ENCODE measurements at regions of chr6 and their contacts with region 1.

Region 1: DNA sequence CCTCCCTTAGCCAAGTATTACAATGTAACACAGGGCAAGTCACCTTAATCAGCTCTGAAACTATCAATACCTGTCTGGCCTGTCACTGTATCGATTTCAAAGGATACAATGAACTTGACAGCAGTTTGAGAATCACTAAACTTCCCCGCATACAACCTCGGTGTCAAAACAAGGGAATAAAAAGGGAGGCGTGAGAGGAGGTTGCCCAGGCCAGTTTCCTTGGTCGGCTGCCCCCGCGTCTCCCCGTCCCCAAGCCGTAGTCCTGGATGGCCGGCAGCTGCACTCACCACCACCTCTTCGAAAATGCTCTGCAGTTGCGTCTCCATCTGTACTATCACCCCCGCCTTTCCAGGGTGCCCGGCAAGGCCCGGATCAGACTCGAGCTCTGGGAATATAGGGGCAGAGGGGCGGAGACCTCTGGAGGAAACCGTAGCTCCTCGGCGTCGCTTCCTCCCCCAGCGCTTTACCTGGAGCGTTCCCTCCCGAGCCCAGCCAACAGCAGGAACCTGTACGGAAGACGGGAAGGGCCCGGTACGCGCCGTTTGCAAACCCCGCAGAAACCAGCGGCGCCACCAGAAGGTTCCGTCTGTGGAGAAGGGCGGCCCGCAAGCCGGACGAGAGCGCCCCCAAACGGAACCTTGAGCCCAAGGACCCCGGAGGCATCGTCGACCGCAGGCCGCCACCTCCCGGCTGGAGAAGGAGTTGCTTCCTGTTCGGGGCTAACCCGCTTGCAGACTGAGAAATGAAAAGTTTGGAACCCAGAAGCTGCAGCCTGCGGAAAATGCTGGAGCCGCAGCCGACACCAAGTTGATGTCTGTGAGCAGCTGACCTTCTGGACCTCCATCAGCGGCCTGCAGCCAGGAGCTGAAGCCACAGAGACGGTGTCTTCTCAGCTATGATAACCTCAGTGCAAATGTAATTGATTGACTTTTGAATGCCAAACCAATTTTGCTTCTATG is at the start of gene MED23:
- DNase-seq: peak; percentile 95
- ATAC-seq: peak; percentile 93
- H3K4me3 Mint-ChIP-seq: peak within 1 kb of the TSS; percentile 98
- H3K27ac Mint-ChIP-seq: peak within 1 kb of the TSS; percentile 94
- H3K4me1 Mint-ChIP-seq: peaks cover 27% of the 10 kb centered on the region
- H3K27me3 Mint-ChIP-seq: no peaks in the 10 kb centered on the region
- total RNA-seq, gene MED23: 26.1 to 27.8 TPM

Region 2: DNA sequence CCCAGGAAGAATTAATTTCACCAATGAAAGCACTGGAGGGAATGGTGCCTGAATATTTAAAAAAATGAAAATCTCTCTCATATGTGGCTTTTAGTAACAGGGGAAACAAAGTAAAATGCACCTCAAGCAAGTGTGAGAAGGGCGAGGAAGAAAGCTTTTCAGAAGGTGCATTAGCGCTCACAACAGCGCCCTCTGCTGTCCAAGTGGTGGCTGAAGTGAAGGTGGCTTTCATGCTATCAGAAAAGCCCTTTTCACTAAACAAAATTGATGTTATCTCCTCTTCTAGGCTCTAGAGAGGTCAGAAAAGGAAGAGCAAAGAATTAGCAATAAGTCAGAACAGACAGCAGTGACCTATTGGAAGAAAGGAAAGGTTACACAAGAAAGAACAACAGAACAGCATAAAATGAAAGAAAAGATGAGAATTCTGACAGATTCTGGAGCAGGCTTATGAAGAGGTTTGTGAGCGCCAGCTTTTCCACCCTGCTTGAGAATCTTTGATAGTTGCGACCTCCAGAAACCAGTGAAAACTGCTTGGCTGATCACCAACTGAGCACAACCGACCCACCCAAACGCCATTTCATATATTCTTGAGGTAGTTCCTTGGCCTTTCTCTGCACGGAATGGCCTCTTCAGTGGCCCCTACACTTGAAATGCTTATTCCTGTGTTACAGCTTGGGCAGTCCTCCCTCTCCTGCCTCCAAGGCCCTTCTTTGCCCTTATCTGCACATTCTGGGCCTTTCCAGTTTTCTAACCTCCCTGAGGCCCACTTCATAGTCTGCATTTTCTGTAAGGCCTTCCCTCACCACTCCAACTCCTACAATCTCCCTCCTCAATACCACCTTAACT is 755.5 kb before region 1 on chr6:
- CTCF ChIA-PET with region 1: interaction called, 11 read pairs
- POLR2A ChIA-PET with region 1: no interaction called
- DNase-seq: peak; percentile 83
- ATAC-seq: no peak
- H3K4me3 Mint-ChIP-seq: no peak overlapping the region
- H3K27ac Mint-ChIP-seq: no peak overlapping the region
- H3K4me1 Mint-ChIP-seq: peaks cover 4% of the 10 kb centered on the region
- H3K27me3 Mint-ChIP-seq: no peaks in the 10 kb centered on the region

Region 3: DNA sequence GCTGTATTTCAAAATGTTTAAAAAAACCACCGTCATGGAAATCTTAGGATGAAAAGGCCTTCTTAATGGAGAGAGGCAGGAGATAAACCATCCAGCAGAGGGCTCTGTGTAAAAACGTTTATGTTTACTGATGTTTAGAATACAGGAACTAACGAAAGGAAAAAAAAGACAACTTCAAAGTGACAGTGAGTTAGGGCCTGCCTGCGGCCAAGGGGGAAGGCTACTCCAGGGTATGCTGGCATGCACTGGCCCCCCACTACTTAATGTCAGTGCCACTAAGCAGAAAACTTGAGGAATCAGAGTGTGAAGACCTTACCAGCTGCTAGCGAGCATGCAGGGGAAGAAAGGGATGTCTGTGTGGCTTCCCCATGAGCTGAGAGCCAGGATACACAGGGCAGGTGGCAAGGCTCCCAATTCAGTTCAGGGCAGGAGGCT is 445.0 kb before region 1 on chr6:
- CTCF ChIA-PET with region 1: interaction called, 21 read pairs
- POLR2A ChIA-PET with region 1: no interaction called
- DNase-seq: peak; percentile 55
- ATAC-seq: peak; percentile 88
- H3K4me3 Mint-ChIP-seq: no peak overlapping the region
- H3K27ac Mint-ChIP-seq: peak overlapping the region; percentile 96
- H3K4me1 Mint-ChIP-seq: peaks cover 11% of the 10 kb centered on the region
- H3K27me3 Mint-ChIP-seq: no peaks in the 10 kb centered on the region

Region 4: GRCh38 chr6:131532580-131533039 is 95.4 kb before region 1 on chr6:
- CTCF ChIA-PET with region 1: interaction called, 25 read pairs
- POLR2A ChIA-PET with region 1: no interaction called
- DNase-seq: no peak
- ATAC-seq: peak; percentile 46
- H3K4me3 Mint-ChIP-seq: no peak overlapping the region
- H3K27ac Mint-ChIP-seq: peak overlapping the region; percentile 49
- H3K4me1 Mint-ChIP-seq: peaks cover 59% of the 10 kb centered on the region
- H3K27me3 Mint-ChIP-seq: peaks cover 4% of the 10 kb centered on the region

Region 5: DNA sequence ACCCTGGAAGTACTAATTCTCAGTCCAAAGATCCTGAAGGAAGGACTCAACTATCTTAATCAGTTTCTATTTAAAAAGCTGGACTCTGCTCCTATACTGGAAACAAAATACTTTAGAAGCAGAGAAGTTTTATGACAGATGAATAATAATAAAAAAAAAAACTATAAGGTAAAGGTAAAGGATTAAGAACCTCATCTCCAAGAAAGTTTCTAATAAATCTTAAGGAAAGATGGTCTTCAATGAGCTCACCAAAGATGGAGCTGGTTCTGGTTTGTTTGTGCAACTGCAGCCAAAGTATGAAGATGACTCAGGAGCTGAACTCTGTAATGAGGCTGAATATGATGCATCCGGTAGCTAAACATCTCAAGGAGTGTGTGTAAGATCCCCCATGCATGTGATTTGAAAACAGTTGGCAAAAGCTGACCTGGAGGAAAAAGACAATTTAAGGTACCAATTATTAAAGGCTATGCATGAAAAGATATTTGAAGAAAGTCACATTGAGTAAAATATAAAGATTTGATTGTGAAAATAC is 25.2 kb before region 1 on chr6:
- CTCF ChIA-PET with region 1: interaction called, 32 read pairs
- POLR2A ChIA-PET with region 1: interaction called, 3 read pairs
- DNase-seq: no peak
- ATAC-seq: no peak
- H3K4me3 Mint-ChIP-seq: no peak overlapping the region
- H3K27ac Mint-ChIP-seq: no peak overlapping the region
- H3K4me1 Mint-ChIP-seq: no peaks in the 10 kb centered on the region
- H3K27me3 Mint-ChIP-seq: no peaks in the 10 kb centered on the region

Region 6: GRCh38 chr6:131654326-131654725 is 26.3 kb after region 1 on chr6:
- CTCF ChIA-PET with region 1: interaction called, 16 read pairs
- POLR2A ChIA-PET with region 1: no interaction called
- DNase-seq: no peak
- ATAC-seq: no peak
- H3K4me3 Mint-ChIP-seq: no peak overlapping the region
- H3K27ac Mint-ChIP-seq: no peak overlapping the region
- H3K4me1 Mint-ChIP-seq: no peaks in the 10 kb centered on the region
- H3K27me3 Mint-ChIP-seq: no peaks in the 10 kb centered on the region

Region 7: GRCh38 chr6:131976545-131977061 is 348.6 kb after region 1 on chr6:
- CTCF ChIA-PET with region 1: no interaction called
- POLR2A ChIA-PET with region 1: no interaction called
- DNase-seq: no peak
- ATAC-seq: no peak
- H3K4me3 Mint-ChIP-seq: no peak overlapping the region
- H3K27ac Mint-ChIP-seq: no peak overlapping the region
- H3K4me1 Mint-ChIP-seq: no peaks in the 10 kb centered on the region
- H3K27me3 Mint-ChIP-seq: peaks cover 2% of the 10 kb centered on the region